ENCODE measurements at regions of chr1 and their contacts with region 1.

Region 1: DNA sequence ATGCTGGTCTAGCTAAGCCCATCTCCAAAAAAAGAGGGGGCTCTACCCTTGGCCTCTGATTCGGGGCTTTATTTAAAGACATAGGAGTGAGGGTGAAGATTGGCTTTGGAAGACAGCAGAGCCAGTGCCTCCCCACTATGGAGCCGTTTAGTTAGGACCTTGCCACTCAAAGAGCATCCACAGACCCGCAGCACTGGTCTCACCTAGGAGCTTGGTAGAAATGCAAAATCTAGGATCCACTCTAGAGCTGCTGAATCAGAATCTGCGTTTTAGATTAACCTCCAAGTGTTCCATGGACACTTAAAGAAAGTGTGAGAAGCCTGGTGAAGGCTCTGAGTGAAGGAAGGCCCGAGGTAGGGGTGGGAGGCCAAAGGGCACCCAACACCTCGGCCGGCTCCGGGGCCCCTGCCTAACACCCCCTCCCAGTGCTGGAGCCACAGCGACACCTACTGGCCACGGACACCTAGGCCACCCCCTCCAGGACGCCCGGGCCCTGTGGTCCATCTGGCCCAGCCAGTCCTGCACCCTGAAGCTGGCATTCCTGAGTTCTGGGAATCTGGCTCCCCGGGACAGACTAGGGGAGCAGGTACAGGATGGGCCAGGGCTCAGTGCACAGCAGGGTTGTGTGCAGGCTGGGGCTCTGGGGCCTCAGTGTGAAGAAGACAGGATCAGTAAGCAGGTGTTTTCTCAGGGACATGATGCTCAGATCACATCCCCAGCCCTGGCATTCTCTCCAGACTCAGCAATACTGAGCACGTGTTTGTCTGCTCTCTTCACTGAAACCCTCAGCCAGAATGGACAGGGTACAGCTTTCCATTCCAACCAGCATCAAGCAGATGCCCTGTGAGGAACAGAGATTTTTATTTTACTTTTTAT is 79.2 kb downstream of the TMEM53 start:
- DNase-seq: peak; percentile 55 to 85 (median 70)
- ATAC-seq: peak; percentile 77
- H3K4me3 ChIP-seq: no peak overlapping the region
- H3K4me3 Mint-ChIP-seq: no peak overlapping the region
- H3K27ac ChIP-seq: no peak overlapping the region
- H3K27ac Mint-ChIP-seq: no peak overlapping the region
- H3K4me1 ChIP-seq: peaks cover 6% of the 10 kb centered on the region
- H3K4me1 Mint-ChIP-seq: no peaks in the 10 kb centered on the region
- H3K27me3 ChIP-seq: peaks cover 0 to 3% of the 10 kb centered on the region in 2 experiments
- H3K27me3 Mint-ChIP-seq: no peaks in the 10 kb centered on the region
- CTCF ChIP-seq: peak; percentile 90

Region 2: DNA sequence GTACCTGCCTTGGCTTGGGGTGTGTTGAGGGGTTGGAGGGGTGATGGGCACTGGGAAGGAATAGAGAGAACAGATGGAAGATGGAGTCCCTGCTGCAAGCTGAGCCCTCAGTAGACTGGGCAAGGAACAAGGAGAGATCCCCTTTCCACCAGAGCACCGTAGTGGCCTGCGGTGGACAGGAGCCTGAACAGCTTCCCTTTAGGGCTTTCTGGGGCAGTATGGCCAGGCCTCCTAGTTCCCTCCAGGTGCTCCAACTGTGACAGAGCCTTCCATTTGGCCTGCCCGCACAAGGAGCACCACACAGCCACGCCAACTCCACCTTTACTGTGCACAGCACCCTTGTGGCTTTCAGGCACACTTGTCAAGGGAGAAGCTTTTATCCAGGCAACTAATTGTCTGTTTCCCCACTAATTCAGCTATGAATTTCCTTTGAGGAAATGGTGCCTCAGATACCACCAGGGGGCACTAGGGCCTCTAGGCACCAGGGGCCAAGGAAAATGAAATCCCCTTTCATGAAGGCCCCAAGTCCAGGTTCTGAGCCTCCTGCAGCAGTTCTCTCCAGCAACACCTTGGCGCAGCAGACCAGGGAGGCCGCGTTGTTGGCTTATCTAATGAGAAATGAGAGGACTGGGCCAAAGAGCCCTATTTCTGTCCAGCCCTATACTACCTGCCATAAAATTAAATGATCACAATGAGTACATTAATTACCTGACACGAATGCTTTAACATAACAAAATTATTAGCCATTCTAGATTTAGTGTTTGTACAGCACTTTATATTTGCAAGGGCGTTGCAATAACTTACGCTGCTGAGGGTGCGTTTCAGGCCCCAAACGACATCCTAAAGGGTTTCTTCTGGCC is 217.0 kb before region 1 on chr1:
- CTCF ChIA-PET with region 1: no interaction called
- POLR2A ChIA-PET with region 1: no interaction called
- intact Hi-C with region 1: loop called in 1 of 2 experiments (anchors 1 kb)
- DNase-seq: peak; percentile 6 to 71 (median 24)
- ATAC-seq: no peak
- H3K4me3 ChIP-seq: no peak overlapping the region
- H3K4me3 Mint-ChIP-seq: no peak overlapping the region
- H3K27ac ChIP-seq: no peak overlapping the region
- H3K27ac Mint-ChIP-seq: no peak overlapping the region
- H3K4me1 ChIP-seq: no peaks in the 10 kb centered on the region
- H3K4me1 Mint-ChIP-seq: no peaks in the 10 kb centered on the region
- H3K27me3 ChIP-seq: no peaks in the 10 kb centered on the region
- H3K27me3 Mint-ChIP-seq: no peaks in the 10 kb centered on the region
- CTCF ChIP-seq: peak; percentile 52